CD4-positive, alpha-beta memory T cell (primary cell): ENCODE measurements at regions of chr20 and their contacts with region 1.

Region 1: GRCh38 chr20:53578492-53579222 is 15.0 kb downstream of the ZNF217 start:
- DNase-seq: peak; percentile 78 to 83 (median 83)
- H3K4me3 ChIP-seq: peak overlapping the region; percentile 45 to 79
- H3K4me3 Mint-ChIP-seq: peak overlapping the region; percentile 85 to 95 (median 90)
- H3K27ac ChIP-seq: peak overlapping the region; percentile 68
- H3K27ac Mint-ChIP-seq: peak overlapping the region; percentile 94 to 100 (median 95)
- H3K4me1 ChIP-seq: peaks cover 97% of the 10 kb centered on the region
- H3K4me1 Mint-ChIP-seq: peaks cover 57 to 95% (median 75%) of the 10 kb centered on the region in 4 donors
- H3K27me3 ChIP-seq: no peaks in the 10 kb centered on the region
- H3K27me3 Mint-ChIP-seq: no peaks in the 10 kb centered on the region

Region 2: GRCh38 chr20:51934301-51935002 is 1644.2 kb before region 1 on chr20:
- CTCF ChIA-PET with region 1: no interaction called
- POLR2A ChIA-PET with region 1: no interaction called
- intact Hi-C with region 1: no loop called
- DNase-seq: no peak
- H3K4me3 ChIP-seq: no peak overlapping the region
- H3K4me3 Mint-ChIP-seq: no peak overlapping the region
- H3K27ac ChIP-seq: no peak overlapping the region
- H3K27ac Mint-ChIP-seq: no peak overlapping the region
- H3K4me1 ChIP-seq: no peaks in the 10 kb centered on the region
- H3K4me1 Mint-ChIP-seq: no peaks in the 10 kb centered on the region
- H3K27me3 ChIP-seq: no peaks in the 10 kb centered on the region
- H3K27me3 Mint-ChIP-seq: peaks cover 0 to 2% of the 10 kb centered on the region in 2 donors

Region 3: DNA sequence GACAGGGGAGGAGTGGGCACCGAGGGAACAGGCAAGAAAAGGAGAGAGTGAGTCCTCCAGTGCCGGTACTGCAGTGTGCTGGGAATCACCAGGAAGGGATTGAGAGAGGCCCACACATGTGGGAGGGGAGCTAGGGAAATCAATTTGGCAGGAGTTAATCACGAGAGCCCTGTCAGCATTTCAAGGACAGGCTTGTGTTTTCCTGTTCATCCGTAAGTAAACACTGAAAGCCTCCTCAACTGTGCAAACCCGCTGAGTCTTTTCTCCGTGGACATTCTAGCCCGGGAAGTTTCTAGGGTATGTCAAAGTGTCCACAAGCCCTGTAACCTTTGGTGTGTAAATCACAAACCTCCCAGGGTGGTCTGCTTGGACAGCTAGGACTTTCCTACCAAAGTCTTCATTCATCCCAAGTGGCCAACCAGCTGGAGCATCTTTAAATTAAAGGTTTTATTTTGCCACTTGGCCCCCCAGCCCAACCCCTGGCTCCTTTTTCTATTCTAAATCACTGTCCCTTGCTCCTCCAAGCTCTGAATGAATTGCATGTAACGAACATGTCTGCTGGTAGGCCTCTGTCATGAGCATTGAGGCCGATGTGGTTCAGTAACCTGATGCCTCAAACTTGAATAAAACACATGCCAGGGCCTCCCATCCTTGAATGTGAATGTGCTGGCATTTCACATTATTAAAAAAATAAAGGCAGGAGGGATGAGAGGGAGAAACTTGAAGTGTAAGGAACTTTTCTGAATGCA is 134.1 kb before region 1 on chr20:
- CTCF ChIA-PET with region 1: no interaction called
- POLR2A ChIA-PET with region 1: no interaction called
- intact Hi-C with region 1: no loop called
- DNase-seq: no peak
- H3K4me3 ChIP-seq: no peak overlapping the region
- H3K4me3 Mint-ChIP-seq: no peak overlapping the region
- H3K27ac ChIP-seq: no peak overlapping the region
- H3K27ac Mint-ChIP-seq: no peak overlapping the region
- H3K4me1 ChIP-seq: no peaks in the 10 kb centered on the region
- H3K4me1 Mint-ChIP-seq: peaks cover 0 to 2% (median 0%) of the 10 kb centered on the region in 4 donors
- H3K27me3 ChIP-seq: no peaks in the 10 kb centered on the region
- H3K27me3 Mint-ChIP-seq: peaks cover 1 to 5% of the 10 kb centered on the region in 2 donors

Region 4: DNA sequence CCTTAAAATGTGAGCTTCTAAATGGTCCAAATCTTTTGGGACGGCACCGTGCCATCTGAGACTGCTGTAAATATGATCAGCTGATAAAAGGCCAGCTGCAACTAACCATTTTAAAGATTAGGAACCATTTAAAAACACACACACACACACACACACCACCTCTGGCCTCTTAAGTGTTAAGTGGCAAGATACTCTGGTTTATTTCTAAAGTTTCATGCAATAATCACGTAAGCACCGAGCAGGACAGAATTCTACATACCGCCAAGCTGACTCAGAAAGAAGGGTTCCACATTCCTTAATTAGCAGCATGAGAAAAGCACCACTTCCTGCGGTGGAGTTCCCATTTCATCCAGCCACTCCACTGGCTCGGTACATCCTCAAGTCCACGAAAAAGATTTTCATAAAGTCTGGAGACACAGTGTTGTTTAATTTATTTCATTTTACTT is 32.8 kb after region 1 on chr20:
- CTCF ChIA-PET with region 1: interaction called, 16 read pairs
- POLR2A ChIA-PET with region 1: interaction called, 50 read pairs
- intact Hi-C with region 1: loop called (anchors 1 kb)
- DNase-seq: no peak
- H3K4me3 ChIP-seq: no peak overlapping the region
- H3K4me3 Mint-ChIP-seq: no peak overlapping the region
- H3K27ac ChIP-seq: no peak overlapping the region
- H3K27ac Mint-ChIP-seq: peak overlapping the region in 2 of 7 donors; percentile 13 to 73
- H3K4me1 ChIP-seq: peaks cover 33% of the 10 kb centered on the region
- H3K4me1 Mint-ChIP-seq: peaks cover 13 to 28% (median 22%) of the 10 kb centered on the region in 4 donors
- H3K27me3 ChIP-seq: no peaks in the 10 kb centered on the region
- H3K27me3 Mint-ChIP-seq: no peaks in the 10 kb centered on the region

Region 5: DNA sequence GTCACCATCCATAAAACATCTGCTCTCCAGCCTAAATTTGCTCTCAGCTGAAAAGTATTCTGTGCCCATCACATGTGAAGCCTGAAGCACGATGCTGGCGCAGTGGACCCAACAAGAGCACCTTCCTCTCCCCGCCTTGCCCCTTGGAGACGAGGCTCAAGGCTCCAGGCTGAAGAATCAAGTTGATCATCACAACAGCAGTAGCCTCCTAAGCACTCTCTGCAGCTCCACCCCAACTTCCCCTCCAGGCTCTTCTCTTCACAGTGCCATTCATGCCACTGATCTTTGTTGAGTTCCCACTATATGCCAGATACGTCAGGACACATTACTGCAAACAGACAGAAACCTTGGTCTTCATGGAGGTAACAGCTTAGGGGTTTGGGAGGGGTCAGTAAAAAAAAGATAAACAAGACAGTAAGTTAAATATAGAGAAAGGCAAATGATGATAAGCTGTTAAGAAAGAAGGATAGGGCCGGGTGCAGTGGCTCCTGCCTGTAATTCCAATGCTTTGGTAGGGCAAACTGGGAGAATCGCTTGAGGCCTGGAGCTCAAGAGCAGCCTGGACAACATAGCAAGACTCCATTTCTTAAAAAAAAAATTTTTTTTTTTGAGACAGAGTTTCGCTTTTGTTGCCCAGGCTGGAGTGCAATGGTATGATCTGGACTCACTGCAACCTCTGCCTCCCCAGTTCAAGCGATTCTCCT is 56.7 kb after region 1 on chr20:
- CTCF ChIA-PET with region 1: no interaction called
- POLR2A ChIA-PET with region 1: no interaction called
- intact Hi-C with region 1: no loop called
- DNase-seq: no peak
- H3K4me3 ChIP-seq: no peak overlapping the region
- H3K4me3 Mint-ChIP-seq: no peak overlapping the region
- H3K27ac ChIP-seq: no peak overlapping the region
- H3K27ac Mint-ChIP-seq: peak overlapping the region in 4 of 7 donors; percentile 1 to 72 (median 42)
- H3K4me1 ChIP-seq: peaks cover 10% of the 10 kb centered on the region
- H3K4me1 Mint-ChIP-seq: peaks cover 12 to 27% (median 18%) of the 10 kb centered on the region in 4 donors
- H3K27me3 ChIP-seq: no peaks in the 10 kb centered on the region
- H3K27me3 Mint-ChIP-seq: no peaks in the 10 kb centered on the region

Region 6: DNA sequence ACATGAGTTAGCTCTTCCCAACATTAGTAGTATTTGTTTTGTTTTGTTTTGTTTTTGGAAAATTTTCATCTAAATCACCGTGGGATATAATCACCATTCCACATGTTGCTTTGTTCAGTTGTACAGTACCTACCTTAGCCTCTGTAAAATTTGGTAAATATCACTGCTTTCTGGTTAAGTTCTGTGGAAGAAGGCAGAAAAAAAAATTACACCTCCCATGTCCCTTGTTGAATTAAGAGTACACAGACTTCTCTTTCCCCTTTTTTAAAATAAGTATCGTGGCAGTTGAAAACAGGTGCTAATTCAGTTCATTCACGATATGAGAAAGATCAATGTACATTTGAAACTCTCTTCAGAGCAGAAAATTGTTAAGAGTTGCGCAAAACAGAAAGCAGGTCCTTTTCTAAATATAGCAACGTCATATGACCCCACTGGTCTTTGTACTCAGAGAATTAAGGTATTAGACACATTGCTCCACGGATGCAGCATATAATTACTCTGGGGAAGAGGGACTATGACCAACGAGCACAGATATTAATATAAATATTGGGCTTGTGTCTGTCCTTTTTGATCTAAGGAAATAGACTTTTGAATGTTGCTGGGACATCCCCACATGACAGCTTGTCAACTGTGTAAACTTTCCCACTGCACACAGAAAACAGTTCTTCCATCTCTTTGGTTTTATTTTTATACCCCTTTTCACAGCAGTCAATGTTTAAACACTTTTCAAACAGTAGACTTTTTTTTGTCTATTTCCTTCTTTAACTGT is 73.6 kb after region 1 on chr20:
- CTCF ChIA-PET with region 1: interaction called, 5 read pairs
- POLR2A ChIA-PET with region 1: interaction called, 15 read pairs
- intact Hi-C with region 1: loop called (anchors 2 kb)
- DNase-seq: peak; percentile 21 to 44 (median 32)
- H3K4me3 ChIP-seq: peak overlapping the region; percentile 4 to 11
- H3K4me3 Mint-ChIP-seq: peak overlapping the region; percentile 49 to 82 (median 74)
- H3K27ac ChIP-seq: peak overlapping the region; percentile 55
- H3K27ac Mint-ChIP-seq: peak overlapping the region; percentile 80 to 97 (median 94)
- H3K4me1 ChIP-seq: peaks cover 43% of the 10 kb centered on the region
- H3K4me1 Mint-ChIP-seq: peaks cover 27 to 41% (median 35%) of the 10 kb centered on the region in 4 donors
- H3K27me3 ChIP-seq: no peaks in the 10 kb centered on the region
- H3K27me3 Mint-ChIP-seq: no peaks in the 10 kb centered on the region

Region 7: DNA sequence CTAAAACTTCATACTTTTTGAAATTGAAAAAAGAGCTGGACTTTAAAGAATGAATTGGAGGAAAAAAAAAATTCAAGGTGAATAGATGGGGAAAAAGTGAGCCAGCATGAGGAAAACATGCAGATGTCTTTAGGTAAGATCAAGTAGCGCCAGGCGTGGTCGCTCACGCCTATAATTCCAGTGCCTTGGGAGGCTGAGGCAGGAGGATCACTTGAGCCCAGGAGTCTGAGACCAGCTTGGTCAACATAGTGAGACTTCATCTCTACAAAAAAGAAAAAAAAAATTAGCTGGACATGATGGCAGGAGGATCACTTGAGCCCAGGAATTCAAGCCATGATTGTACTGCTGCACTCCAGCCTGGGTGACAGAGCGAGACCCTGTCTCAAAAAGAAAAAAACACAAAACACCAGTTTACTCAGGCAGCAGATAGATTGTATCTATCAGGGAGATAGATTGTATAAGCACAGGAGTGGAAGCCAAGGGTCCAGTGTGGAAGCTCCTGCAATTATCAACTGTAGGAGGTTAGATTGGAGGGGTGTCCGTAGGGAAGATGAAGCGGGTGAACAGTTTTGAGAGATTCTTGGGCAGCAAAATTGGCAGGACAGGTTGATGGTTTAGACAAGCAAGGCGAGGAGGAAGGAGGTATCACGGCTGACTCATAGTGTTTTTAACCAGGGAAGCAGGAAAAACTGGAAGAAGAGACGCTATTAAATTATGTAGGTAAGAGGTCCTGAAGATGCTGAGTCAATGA is 112.6 kb after region 1 on chr20:
- CTCF ChIA-PET with region 1: no interaction called
- POLR2A ChIA-PET with region 1: no interaction called
- intact Hi-C with region 1: no loop called
- DNase-seq: no peak
- H3K4me3 ChIP-seq: no peak overlapping the region
- H3K4me3 Mint-ChIP-seq: peak overlapping the region in 3 of 8 donors; percentile 3 to 22 (median 21)
- H3K27ac ChIP-seq: no peak overlapping the region
- H3K27ac Mint-ChIP-seq: peak overlapping the region in 6 of 7 donors; percentile 10 to 86 (median 58)
- H3K4me1 ChIP-seq: peaks cover 11% of the 10 kb centered on the region
- H3K4me1 Mint-ChIP-seq: peaks cover 10 to 24% (median 19%) of the 10 kb centered on the region in 4 donors
- H3K27me3 ChIP-seq: no peaks in the 10 kb centered on the region
- H3K27me3 Mint-ChIP-seq: no peaks in the 10 kb centered on the region

Region 8: DNA sequence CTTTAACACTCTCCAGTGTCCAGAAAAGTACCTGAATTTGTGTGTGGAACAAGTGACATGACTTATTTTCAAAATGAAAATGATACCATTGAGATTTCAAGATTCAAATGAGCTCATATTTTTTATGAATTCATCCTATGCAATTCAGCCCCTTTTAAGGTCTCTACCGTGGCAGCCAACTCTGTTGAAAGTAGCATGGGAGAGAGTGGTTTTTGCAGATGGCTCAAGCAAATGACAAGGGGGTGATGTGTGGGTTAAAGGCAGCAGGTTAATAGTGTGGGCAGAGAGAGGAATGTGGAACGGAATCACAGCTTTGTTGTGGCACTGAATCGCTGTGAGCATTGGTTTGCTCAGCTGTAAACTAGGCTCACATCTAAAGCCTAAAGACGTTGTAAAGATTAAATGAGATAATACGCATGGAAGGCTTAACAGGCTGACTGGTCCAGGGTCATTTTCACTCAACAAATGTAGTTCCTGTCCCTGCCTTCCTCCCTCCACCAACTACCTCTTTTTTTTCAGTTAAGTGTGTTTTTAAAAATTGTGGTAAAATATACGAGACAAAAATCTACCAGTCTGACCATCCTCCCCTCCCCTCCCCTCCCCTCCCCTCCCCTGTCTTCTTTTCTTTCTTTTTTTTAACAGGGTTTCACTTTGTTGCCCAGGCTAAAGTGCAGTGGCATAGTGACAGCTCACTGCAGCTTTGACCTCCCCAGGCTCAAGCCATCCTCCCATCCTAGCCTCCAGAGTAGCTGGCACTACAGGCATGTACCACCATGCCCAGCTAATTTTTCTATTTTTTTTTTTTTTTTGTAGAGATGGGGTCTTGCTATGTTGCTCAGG is 129.7 kb after region 1 on chr20:
- CTCF ChIA-PET with region 1: interaction called, 3 read pairs
- POLR2A ChIA-PET with region 1: interaction called, 5 read pairs
- intact Hi-C with region 1: loop called (anchors 2 kb)
- DNase-seq: peak in 4 of 5 donors; percentile 17 to 41 (median 26)
- H3K4me3 ChIP-seq: no peak overlapping the region
- H3K4me3 Mint-ChIP-seq: peak overlapping the region in 7 of 8 donors; percentile 31 to 91 (median 69)
- H3K27ac ChIP-seq: peak overlapping the region; percentile 3
- H3K27ac Mint-ChIP-seq: peak overlapping the region; percentile 76 to 98 (median 92)
- H3K4me1 ChIP-seq: peaks cover 39% of the 10 kb centered on the region
- H3K4me1 Mint-ChIP-seq: peaks cover 31 to 47% (median 36%) of the 10 kb centered on the region in 4 donors
- H3K27me3 ChIP-seq: no peaks in the 10 kb centered on the region
- H3K27me3 Mint-ChIP-seq: no peaks in the 10 kb centered on the region

Region 9: DNA sequence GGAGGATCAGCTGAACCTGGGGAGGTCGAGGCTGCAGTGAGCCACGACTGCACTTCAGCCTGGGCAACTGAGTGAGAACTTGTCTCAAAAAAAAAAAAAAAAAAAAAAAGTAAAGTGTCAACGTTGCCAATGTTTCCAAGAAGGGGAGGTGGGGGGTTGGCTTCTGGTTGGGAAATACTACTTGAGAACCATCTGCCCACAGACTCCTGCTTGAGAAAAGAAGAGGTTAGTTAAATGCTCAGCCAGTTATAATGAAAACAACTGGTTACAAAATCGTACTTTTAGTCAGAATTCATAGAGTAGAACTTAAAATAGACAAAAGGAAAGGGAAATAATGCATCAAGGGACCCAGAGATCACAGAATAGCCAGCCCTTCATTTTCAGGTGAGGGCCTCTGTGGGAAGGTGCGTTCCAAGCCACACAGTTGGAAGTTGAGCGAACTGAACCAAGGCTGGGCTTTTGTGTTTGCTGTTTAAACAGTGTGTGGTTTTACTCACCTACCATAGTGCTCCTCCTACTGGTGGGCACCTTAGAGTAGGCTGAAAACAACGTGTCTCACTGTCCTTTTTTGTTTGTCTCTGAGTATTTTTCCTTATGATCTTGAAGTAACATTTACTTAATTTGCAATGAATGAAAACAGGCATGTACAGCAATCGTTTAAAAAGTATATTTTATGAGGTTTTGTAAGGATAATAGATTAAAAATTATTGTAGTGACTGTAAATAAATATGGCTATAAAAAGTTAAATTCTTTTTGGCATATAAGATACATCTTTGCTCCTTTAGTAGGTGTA is 291.0 kb after region 1 on chr20:
- CTCF ChIA-PET with region 1: interaction called, 26 read pairs
- POLR2A ChIA-PET with region 1: interaction called, 77 read pairs
- intact Hi-C with region 1: loop called (anchors 1 kb)
- DNase-seq: peak; percentile 73 to 81 (median 77)
- H3K4me3 ChIP-seq: peak overlapping the region in 1 of 2 donors; percentile 15
- H3K4me3 Mint-ChIP-seq: peak overlapping the region in 7 of 8 donors; percentile 30 to 81 (median 66)
- H3K27ac ChIP-seq: peak overlapping the region; percentile 47
- H3K27ac Mint-ChIP-seq: peak overlapping the region; percentile 73 to 97 (median 93)
- H3K4me1 ChIP-seq: peaks cover 89% of the 10 kb centered on the region
- H3K4me1 Mint-ChIP-seq: peaks cover 57 to 90% (median 69%) of the 10 kb centered on the region in 4 donors
- H3K27me3 ChIP-seq: no peaks in the 10 kb centered on the region
- H3K27me3 Mint-ChIP-seq: peaks cover 0 to 2% of the 10 kb centered on the region in 2 donors

Region 10: GRCh38 chr20:53934421-53935343 is 356.0 kb after region 1 on chr20:
- CTCF ChIA-PET with region 1: interaction called, 50 read pairs
- POLR2A ChIA-PET with region 1: interaction called, 15 read pairs
- intact Hi-C with region 1: no loop called
- DNase-seq: peak in 2 of 5 donors; percentile 19 to 43
- H3K4me3 ChIP-seq: no peak overlapping the region
- H3K4me3 Mint-ChIP-seq: peak overlapping the region; percentile 45 to 86 (median 76)
- H3K27ac ChIP-seq: peak overlapping the region; percentile 1
- H3K27ac Mint-ChIP-seq: peak overlapping the region; percentile 54 to 87 (median 76)
- H3K4me1 ChIP-seq: peaks cover 30% of the 10 kb centered on the region
- H3K4me1 Mint-ChIP-seq: peaks cover 24 to 40% (median 32%) of the 10 kb centered on the region in 4 donors
- H3K27me3 ChIP-seq: no peaks in the 10 kb centered on the region
- H3K27me3 Mint-ChIP-seq: peaks cover 0 to 2% of the 10 kb centered on the region in 2 donors

Region 11: DNA sequence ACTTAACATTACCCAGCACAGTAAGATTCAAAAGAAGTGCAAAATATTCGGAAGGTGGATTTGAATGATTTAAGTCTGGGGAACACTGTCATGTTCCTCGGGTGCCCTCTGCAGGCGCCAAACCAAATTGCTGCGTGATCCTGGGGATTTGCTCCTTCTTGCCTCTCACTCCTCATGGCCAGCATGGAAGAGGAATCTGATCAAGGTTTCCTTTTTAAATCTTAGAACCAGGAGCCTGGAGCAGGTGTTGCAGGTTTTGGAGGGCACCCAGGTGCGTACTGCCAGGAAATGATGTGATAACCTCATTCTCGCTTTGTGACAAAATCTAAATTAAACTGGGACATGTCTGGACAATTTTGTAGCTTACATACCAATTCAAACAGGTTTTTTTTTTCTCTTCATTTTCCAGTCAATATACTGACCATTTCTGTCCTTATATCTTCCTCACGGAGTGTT is 621.1 kb after region 1 on chr20:
- CTCF ChIA-PET with region 1: no interaction called
- POLR2A ChIA-PET with region 1: no interaction called
- intact Hi-C with region 1: loop called (anchors 5 kb)
- DNase-seq: peak; percentile 53 to 62 (median 57)
- H3K4me3 ChIP-seq: no peak overlapping the region
- H3K4me3 Mint-ChIP-seq: no peak overlapping the region
- H3K27ac ChIP-seq: no peak overlapping the region
- H3K27ac Mint-ChIP-seq: no peak overlapping the region
- H3K4me1 ChIP-seq: no peaks in the 10 kb centered on the region
- H3K4me1 Mint-ChIP-seq: peaks cover 0 to 5% (median 0%) of the 10 kb centered on the region in 4 donors
- H3K27me3 ChIP-seq: no peaks in the 10 kb centered on the region
- H3K27me3 Mint-ChIP-seq: peaks cover 0 to 2% of the 10 kb centered on the region in 2 donors